Activated B cell treated with CpG ODN at 0.5 μM for 24 hours (primary cell): ENCODE measurements at regions of chr14 and their contacts with region 1.

Region 1: DNA sequence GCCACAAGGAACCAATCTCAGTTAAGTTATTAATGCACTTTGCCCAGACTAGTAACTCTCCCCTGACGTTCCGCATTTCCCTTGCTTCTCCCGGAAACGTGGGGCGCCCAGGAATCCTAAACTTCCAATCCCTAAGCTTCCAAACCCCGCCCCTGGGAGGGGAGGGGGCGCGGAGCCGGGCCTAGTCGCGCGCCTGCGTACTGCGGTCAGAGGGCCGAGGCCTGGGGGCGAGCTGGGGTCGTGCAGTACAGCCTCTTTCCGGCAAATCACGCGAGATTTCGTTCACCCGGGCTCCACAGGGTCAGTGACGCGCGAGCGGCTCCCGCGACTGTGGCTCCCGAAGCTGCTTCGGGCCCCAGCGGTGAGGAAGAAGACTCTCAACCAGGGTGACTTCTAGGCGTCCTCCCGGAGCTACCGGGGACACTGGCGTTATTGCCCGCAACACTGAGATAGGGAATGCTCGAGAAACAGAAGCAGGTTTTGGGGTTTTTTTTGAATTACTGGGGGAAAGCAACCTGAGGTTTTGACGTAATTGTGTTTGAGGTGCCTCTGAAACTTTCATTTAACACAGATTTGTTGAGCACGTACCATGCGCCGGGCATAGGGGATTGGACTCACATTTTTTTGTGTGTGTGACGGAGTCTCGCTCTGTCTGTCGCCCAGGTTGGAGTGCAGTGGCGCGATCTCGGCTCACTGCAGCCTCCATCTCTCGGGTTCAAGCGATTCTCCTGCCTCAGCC is at the start of gene PTGR2:
- DNase-seq: peak; percentile 81
- ATAC-seq: peak; percentile 96
- H3K4me3 Mint-ChIP-seq: peak within 1 kb of the TSS; percentile 93
- H3K27ac Mint-ChIP-seq: peak within 1 kb of the TSS; percentile 96
- H3K4me1 Mint-ChIP-seq: peaks cover 21% of the 10 kb centered on the region
- H3K27me3 Mint-ChIP-seq: no peaks in the 10 kb centered on the region
- CTCF ChIP-seq: no peak
- total RNA-seq, gene PTGR2: 4.6 and 4.8 TPM in 2 replicates

Region 2: GRCh38 chr14:73627151-73627558 is 224.7 kb before region 1 on chr14:
- CTCF ChIA-PET with region 1: no interaction called
- POLR2A ChIA-PET with region 1: no interaction called
- intact Hi-C with region 1: no loop called
- DNase-seq: no peak
- ATAC-seq: no peak
- H3K4me3 Mint-ChIP-seq: no peak overlapping the region
- H3K27ac Mint-ChIP-seq: no peak overlapping the region
- H3K4me1 Mint-ChIP-seq: no peaks in the 10 kb centered on the region
- H3K27me3 Mint-ChIP-seq: peaks cover 6% of the 10 kb centered on the region
- CTCF ChIP-seq: no peak

Region 3: GRCh38 chr14:73862480-73862879 is 10.7 kb after region 1 on chr14:
- CTCF ChIA-PET with region 1: interaction called, 3 read pairs
- POLR2A ChIA-PET with region 1: interaction called, 12 read pairs
- intact Hi-C with region 1: no loop called
- DNase-seq: no peak
- ATAC-seq: no peak
- H3K4me3 Mint-ChIP-seq: no peak overlapping the region
- H3K27ac Mint-ChIP-seq: no peak overlapping the region
- H3K4me1 Mint-ChIP-seq: no peaks in the 10 kb centered on the region
- H3K27me3 Mint-ChIP-seq: no peaks in the 10 kb centered on the region
- CTCF ChIP-seq: no peak